GM12878 (cell line): ENCODE measurements at regions of chr19 and their contacts with region 1.

Region 1: DNA sequence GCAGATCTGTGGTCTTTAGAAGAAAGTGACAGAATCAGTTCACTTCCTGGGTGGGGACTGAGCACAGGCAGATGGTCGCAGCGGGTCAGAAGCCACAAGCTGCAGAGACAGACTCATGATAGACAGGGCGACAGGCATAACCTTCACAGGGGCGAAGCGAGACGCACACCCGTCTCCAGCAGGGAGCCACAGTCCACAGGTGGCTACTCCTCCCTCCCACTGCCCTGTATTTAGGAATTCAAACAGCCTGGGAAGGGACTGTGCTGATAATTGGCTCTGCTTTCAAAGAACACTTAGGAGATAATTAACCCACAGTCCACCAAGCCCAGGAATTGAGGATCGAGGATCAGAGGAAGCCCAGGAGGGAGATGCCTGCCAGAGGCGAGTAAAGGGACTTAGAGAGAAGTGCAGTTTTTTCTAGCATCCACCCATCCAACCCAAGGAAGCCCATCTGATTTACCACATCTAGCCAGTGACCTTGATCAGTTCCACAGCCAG is 23.2 kb downstream of the RFX2 start:
- DNase-seq: peak; percentile 40
- ATAC-seq: peak; percentile 72
- H3K4me3 ChIP-seq: peak overlapping the region; percentile 13; the same call in 1 of the 2 replicates
- H3K27ac ChIP-seq: peak overlapping the region; percentile 17; the same call in 1 of the 2 replicates
- H3K4me1 ChIP-seq: peaks cover 17% of the 10 kb centered on the region
- H3K27me3 ChIP-seq: no peaks in the 10 kb centered on the region
- CTCF ChIP-seq: no peak
- EP300 ChIP-seq: peak in 1 of 2 experiments; percentile 37; a peak in 1 of 4 replicates
- POLR2A ChIP-seq: peak; percentile 63
- RAD21 ChIP-seq: no peak

Region 2: GRCh38 chr19:6038634-6039405 is 48.3 kb before region 1 on chr19:
- CTCF ChIA-PET with region 1: no interaction called
- POLR2A ChIA-PET with region 1: interaction called, 8 read pairs
- RAD21 ChIA-PET with region 1: no interaction called
- SMC1A ChIA-PET with region 1: no interaction called
- in situ Hi-C with region 1: no loop called
- intact Hi-C with region 1: loop called (anchors 1 kb)
- DNase-seq: peak; percentile 82
- ATAC-seq: peak; percentile 97
- H3K4me3 ChIP-seq: no peak overlapping the region; the same call in 1 of the 2 replicates
- H3K27ac ChIP-seq: peak overlapping the region; percentile 67
- H3K4me1 ChIP-seq: peaks cover 19% of the 10 kb centered on the region
- H3K27me3 ChIP-seq: no peaks in the 10 kb centered on the region
- CTCF ChIP-seq: no peak
- EP300 ChIP-seq: peak; percentile 59 to 67; a peak in 2 of 4 replicates
- POLR2A ChIP-seq: no peak
- RAD21 ChIP-seq: no peak

Region 3: DNA sequence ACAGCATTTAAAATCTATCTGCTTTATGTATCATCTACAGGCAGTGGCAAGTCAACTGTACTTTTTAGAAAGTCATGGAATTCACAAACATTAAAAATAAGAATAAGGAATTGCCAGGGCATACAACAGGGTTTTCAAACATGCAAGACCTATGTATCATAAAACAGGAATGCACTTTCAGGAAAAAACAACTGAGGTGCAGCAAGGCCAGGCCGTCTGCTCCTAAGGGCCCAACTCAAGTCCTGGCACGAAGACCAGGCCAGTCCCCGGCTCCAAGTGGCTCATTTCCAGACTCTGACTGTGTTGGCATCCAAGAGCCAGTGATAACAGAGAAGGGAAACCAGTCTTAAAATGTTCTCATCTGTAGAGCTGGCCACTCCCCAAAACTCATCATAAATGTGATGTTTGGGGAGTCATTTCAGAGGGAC is 16.1 kb after region 1 on chr19:
- CTCF ChIA-PET with region 1: interaction called, 6 read pairs
- POLR2A ChIA-PET with region 1: interaction called, 9 read pairs
- RAD21 ChIA-PET with region 1: interaction called, 13 read pairs
- SMC1A ChIA-PET with region 1: interaction called, 6 read pairs
- in situ Hi-C with region 1: no loop called
- intact Hi-C with region 1: no loop called
- DNase-seq: no peak
- ATAC-seq: peak; percentile 49; the same call in 1 of the 3 replicates
- H3K4me3 ChIP-seq: no peak overlapping the region
- H3K27ac ChIP-seq: no peak overlapping the region
- H3K4me1 ChIP-seq: no peaks in the 10 kb centered on the region
- H3K27me3 ChIP-seq: no peaks in the 10 kb centered on the region
- CTCF ChIP-seq: no peak
- EP300 ChIP-seq: no peak
- POLR2A ChIP-seq: no peak
- RAD21 ChIP-seq: no peak